ENCODE measurements at regions of chr6 and their contacts with region 1.

Region 1: DNA sequence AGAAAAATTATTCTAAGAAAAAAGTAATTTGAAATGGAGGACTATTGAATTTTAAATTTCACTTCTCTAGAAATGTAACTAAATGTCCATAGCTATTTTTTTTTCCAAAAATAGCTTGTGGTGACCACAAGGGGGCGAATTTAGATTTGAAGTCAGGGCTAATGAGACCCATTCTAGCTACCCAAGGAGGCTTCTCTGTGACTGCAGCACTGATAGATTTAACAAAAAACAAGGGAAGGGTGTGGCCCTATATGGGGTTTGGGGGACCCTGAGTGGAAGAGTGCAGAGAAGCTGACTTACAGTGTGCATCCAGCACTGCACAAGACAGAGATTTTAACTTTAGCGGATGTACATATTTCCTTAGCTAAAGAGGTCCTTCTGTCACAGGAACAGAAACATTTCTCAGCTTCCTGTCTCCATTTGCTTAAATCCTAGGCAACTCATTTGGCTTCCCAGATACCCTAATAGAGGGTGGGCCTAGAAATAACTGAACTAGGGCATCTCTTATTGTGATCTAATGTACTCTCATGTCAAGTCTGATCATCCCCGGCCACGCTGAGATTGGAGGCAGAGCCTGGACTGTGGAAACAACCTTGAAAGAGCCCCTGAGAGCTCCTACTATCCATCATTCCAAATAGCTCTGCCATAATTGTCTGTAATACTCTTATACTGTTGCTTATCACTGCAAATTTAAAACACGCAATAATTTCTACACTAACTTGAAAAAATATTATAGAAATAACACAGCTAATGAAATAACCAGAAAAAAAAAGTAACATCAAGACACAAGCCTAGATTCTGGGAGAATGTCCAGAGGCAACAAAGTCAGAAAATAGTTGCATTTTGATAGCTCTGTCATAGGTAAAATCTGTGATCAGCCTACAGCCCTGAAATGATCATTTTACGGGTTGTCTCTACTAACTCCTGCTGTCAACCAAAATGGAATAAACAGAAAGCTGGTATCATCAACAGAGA is 93.6 kb downstream of the SNAP91 start:
- DNase-seq: peak; percentile 63
- H3K4me3 ChIP-seq: no peak overlapping the region
- H3K27ac ChIP-seq: no peak overlapping the region
- H3K4me1 ChIP-seq: peaks cover 3% of the 10 kb centered on the region
- H3K27me3 ChIP-seq: no peaks in the 10 kb centered on the region
- CTCF ChIP-seq: peak; percentile 51 to 57
- POLR2A ChIP-seq: no peak

Region 2: DNA sequence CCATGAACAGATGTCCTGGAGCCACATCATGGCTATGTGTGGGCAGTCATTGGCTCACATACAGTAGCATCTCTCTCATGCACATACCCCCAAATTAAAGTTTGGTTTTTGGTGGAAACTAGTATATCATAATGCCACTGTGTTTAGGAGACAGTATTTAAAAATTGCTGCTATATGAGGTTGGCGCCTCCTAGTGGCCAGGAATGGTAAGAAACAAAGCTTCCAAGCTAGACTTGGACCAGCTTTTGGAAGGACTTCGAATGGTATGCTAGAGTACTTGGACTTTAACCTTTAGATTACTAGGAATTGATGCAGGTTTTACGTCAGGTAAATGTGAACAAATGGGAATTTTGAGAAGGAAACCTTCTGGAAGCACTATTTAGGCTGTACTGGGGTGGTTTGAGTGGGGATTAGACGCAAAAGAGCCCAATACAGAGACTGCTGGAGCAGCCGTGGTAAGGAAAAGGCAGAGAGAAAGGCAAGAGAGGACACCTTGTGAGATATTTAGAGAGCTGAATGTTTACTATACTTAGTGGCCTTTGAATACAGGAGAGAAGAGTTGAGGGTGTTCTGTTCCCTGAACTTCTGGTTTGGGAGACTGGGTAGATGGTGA is 79.2 kb before region 1 on chr6:
- CTCF ChIA-PET with region 1: interaction called, 11 read pairs
- POLR2A ChIA-PET with region 1: no interaction called
- dilution Hi-C with region 1: no loop called
- intact Hi-C with region 1: no loop called
- DNase-seq: peak; percentile 58
- H3K4me3 ChIP-seq: no peak overlapping the region
- H3K27ac ChIP-seq: no peak overlapping the region
- H3K4me1 ChIP-seq: no peaks in the 10 kb centered on the region
- H3K27me3 ChIP-seq: peaks cover 0 to 7% of the 10 kb centered on the region in 2 experiments
- CTCF ChIP-seq: peak; percentile 69 to 81
- POLR2A ChIP-seq: no peak

Region 3: GRCh38 chr6:83636800-83637199 is 21.5 kb after region 1 on chr6:
- CTCF ChIA-PET with region 1: interaction called, 10 read pairs
- POLR2A ChIA-PET with region 1: no interaction called
- dilution Hi-C with region 1: no loop called
- intact Hi-C with region 1: no loop called
- DNase-seq: no peak
- H3K4me3 ChIP-seq: no peak overlapping the region
- H3K27ac ChIP-seq: no peak overlapping the region
- H3K4me1 ChIP-seq: no peaks in the 10 kb centered on the region
- H3K27me3 ChIP-seq: no peaks in the 10 kb centered on the region
- CTCF ChIP-seq: no peak
- POLR2A ChIP-seq: no peak

Region 4: DNA sequence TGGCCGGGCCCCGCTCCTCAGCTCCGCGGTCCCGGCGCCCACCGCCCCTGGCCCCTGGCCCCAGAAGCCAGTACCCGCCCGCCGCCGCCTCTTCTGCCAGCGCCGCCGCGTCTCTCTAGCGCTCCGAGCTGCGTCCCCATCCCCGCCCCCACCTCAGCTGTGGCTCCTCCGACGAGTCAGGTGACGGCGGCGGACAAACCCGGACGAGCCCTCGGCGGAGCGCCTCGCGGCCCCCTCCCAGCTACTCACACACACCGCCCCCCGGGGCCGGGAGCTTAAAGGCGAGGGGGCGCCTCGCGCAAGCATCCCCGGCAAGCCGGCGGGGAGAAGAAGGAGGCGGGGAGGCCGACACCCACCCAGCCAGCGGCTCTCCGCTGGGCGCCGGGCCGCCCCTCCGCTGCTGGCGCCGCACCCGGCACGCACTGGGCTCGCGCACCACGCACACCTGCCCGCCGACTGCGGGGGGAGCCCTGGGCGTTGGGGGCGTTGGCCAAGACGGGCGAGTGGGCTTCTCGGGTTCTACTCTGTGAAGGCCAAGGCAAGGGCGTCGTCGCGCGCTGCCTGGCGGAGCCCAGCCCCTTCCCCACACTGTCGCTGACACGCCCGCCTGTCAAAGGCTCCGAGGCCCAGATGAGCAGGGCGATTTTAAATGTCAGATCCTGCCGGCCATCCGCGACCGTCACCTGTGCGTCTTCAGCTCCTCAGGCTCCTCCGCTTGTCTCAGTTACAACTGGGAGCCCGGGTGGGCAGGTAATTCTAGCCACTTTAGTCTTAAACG is 93.8 kb after region 1 on chr6 and contains the start of gene SNAP91:
- CTCF ChIA-PET with region 1: interaction called, 16 read pairs
- POLR2A ChIA-PET with region 1: no interaction called
- dilution Hi-C with region 1: no loop called
- intact Hi-C with region 1: no loop called
- DNase-seq: peak; percentile 51
- H3K4me3 ChIP-seq: peak within 1 kb of the TSS; percentile 48 to 68 (median 54)
- H3K27ac ChIP-seq: no peak within 1 kb of the TSS
- H3K4me1 ChIP-seq: peaks cover 14% of the 10 kb centered on the region
- H3K27me3 ChIP-seq: peaks cover 9 to 34% of the 10 kb centered on the region in 2 experiments
- CTCF ChIP-seq: no peak
- POLR2A ChIP-seq: no peak
- total RNA-seq, gene SNAP91: 0.72 and 1.5 TPM in 2 replicates

Region 5: GRCh38 chr6:83853178-83854000 is 238.1 kb after region 1 on chr6 and contains the start of gene RIPPLY2:
- CTCF ChIA-PET with region 1: interaction called, 5 read pairs
- POLR2A ChIA-PET with region 1: no interaction called
- dilution Hi-C with region 1: no loop called
- intact Hi-C with region 1: loop called (anchors 2 kb)
- DNase-seq: peak; percentile 41
- H3K4me3 ChIP-seq: peak within 1 kb of the TSS in 2 of 3 experiments; percentile 45 to 61
- H3K27ac ChIP-seq: no peak within 1 kb of the TSS
- H3K4me1 ChIP-seq: peaks cover 13% of the 10 kb centered on the region
- H3K27me3 ChIP-seq: peaks cover 24 to 44% of the 10 kb centered on the region in 2 experiments
- CTCF ChIP-seq: no peak
- POLR2A ChIP-seq: no peak
- total RNA-seq, gene RIPPLY2: 0.53 TPM in 1 of 2 replicates, not detected in the other

Region 6: DNA sequence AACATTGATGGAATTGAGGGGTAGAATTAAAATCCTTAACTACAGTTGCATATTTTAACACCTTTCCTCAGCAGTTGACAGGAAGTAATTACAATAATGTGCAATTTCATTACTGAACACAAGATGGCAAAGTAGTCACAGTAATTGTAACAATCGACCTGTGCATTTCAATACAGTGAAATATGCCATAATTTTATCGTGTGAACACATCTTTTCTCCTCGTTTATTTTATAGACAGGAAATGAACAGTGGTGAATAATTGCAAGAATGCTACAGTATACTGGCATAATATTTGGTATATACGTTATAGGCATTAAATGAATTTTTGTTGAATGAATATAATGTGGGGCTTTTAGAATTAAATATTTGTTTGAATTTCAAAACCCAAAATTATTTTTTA is 269.2 kb after region 1 on chr6:
- CTCF ChIA-PET with region 1: interaction called, 12 read pairs
- POLR2A ChIA-PET with region 1: no interaction called
- dilution Hi-C with region 1: no loop called
- intact Hi-C with region 1: loop called (anchors 10 kb)
- DNase-seq: peak; percentile 84
- H3K4me3 ChIP-seq: no peak overlapping the region
- H3K27ac ChIP-seq: no peak overlapping the region
- H3K4me1 ChIP-seq: peaks cover 9% of the 10 kb centered on the region
- H3K27me3 ChIP-seq: no peaks in the 10 kb centered on the region
- CTCF ChIP-seq: peak; percentile 41 to 59
- POLR2A ChIP-seq: no peak

Region 7: GRCh38 chr6:84227434-84228197 is 612.3 kb after region 1 on chr6 and contains the start of gene CEP162:
- CTCF ChIA-PET with region 1: interaction called, 45 read pairs
- POLR2A ChIA-PET with region 1: no interaction called
- dilution Hi-C with region 1: no loop called
- intact Hi-C with region 1: no loop called
- DNase-seq: peak; percentile 95
- H3K4me3 ChIP-seq: peak within 1 kb of the TSS; percentile 57 to 74 (median 67)
- H3K27ac ChIP-seq: peak within 1 kb of the TSS; percentile 14
- H3K4me1 ChIP-seq: peaks cover 7% of the 10 kb centered on the region
- H3K27me3 ChIP-seq: peaks cover 11 to 24% of the 10 kb centered on the region in 2 experiments
- CTCF ChIP-seq: peak; percentile 55 to 62
- POLR2A ChIP-seq: peak; percentile 20
- total RNA-seq, gene CEP162: 8.8 and 10.8 TPM in 2 replicates

Measured in endothelial cell of umbilical vein (primary cell).